ENCODE measurements at regions of chr7 and their contacts with region 1.

Region 1: DNA sequence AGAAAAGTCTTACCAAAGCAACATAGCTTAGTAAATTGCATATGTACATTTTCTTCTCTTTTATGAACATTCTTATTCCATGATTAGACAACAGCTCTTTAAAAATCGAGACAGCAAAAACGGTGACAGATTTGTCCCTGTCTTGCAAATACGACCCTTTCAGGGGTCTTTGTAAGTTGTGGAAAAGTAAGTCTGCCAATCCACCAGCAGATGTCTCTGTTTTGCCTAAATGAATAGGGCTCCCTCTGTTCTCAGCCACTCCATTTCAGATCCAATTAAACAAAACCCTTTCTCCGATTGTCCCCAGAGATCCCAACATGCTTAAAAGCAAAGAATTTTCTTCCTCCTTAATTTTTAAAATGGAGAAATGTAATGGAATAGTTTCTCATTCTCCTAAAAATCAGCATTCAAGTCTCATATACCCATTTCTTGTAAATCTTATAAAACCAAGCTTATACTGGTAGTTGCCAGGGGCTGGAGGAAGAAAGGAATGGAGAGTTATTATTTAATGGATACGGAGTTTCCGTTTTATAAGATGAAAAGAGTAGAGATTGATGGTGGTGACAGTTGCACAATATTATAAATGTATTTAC is 61.0 kb upstream of the NFE2L3 start:
- DNase-seq: peak; percentile 30
- ATAC-seq: peak; percentile 87
- H3K4me3 ChIP-seq: no peak overlapping the region
- H3K27ac ChIP-seq: no peak overlapping the region
- H3K4me1 ChIP-seq: no peaks in the 10 kb centered on the region
- H3K27me3 ChIP-seq: no peaks in the 10 kb centered on the region
- CTCF ChIP-seq: peak; percentile 63 to 73 (median 65)
- EP300 ChIP-seq: no peak
- POLR2A ChIP-seq: no peak
- RAD21 ChIP-seq: peak; percentile 83

Region 2: DNA sequence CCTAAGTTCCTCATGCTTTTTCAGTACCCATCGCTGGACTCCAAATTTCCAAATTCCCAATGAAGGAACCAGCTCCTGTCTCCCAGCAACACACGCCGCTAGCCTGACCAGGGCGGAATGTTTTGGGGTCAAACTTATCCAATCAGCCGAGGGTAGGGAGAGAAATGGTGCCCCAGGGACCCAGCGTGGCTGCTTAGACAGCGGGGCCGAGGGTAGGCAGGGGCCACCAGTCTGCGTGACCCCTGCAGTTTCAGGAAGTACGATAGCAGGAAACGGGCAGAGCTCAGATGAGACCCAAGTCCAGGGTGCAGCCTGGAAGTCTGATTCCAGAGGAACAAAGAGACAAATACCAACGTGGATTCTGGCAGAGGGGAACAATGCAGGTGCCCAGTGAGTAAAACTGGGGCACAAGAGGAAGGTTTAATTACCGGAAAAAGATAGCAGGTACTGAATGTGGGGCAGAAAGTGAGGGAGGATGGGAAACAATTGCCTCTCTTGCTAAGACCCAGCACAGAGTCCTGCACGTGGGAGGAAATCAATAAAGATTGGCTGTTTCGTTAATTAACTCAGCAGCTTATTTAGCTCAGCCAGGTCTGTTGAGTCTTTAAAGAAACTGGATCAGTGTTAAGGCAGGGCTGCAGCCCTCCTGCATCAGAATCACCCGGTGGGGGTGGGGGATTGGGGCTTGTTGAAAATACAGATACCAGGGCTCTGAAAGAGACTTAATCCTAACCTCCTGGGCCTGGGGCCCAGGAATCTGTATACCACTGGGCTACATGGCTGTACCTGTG is 10.5 kb after region 1 on chr7:
- CTCF ChIA-PET with region 1: interaction called, 25 read pairs
- POLR2A ChIA-PET with region 1: interaction called, 4 read pairs
- RAD21 ChIA-PET with region 1: interaction called, 8 read pairs
- SMC1A ChIA-PET with region 1: interaction called, 20 read pairs
- in situ Hi-C with region 1: no loop called
- intact Hi-C with region 1: no loop called
- DNase-seq: no peak
- ATAC-seq: peak; percentile 87
- H3K4me3 ChIP-seq: peak overlapping the region; percentile 58
- H3K27ac ChIP-seq: peak overlapping the region; percentile 63
- H3K4me1 ChIP-seq: peaks cover 15% of the 10 kb centered on the region
- H3K27me3 ChIP-seq: no peaks in the 10 kb centered on the region
- CTCF ChIP-seq: no peak
- EP300 ChIP-seq: no peak
- POLR2A ChIP-seq: peak; percentile 55
- RAD21 ChIP-seq: no peak

Region 3: DNA sequence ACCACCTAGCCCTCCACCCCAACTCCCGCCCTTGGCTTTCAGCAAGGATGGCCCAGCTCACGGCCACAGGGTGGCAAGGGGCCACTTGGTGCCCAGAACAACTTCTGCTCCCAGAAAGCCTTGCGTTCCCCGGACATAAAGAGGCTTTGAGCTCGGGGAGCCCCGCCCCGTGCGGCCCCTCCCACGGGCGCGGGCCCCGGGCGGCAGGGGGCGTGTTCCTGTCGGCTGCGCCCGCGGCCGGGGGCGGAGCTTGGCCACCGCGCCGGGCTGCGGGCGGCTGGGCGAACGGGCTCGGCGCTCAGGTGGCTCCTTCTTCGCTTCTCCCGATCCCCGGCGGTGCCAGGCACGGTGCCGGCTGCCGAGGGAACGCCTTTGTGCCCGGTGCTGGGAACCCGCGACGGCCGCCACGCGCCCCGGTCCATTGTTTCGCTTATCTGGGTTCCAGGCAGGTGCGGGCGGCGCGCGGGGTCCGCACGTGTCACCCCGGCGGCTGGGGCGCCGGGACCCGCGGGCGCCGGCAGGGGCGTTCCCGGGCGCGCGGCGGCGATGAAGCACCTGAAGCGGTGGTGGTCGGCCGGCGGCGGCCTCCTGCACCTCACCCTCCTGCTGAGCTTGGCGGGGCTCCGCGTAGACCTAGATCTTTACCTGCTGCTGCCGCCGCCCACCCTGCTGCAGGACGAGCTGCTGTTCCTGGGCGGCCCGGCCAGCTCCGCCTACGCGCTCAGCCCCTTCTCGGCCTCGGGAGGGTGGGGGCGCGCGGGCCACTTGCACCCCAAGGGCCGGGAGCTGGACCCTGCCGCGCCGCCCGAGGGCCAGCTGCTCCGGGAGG is 61.1 kb after region 1 on chr7 and contains the start of gene NFE2L3:
- CTCF ChIA-PET with region 1: interaction called, 24 read pairs
- POLR2A ChIA-PET with region 1: interaction called, 5 read pairs
- RAD21 ChIA-PET with region 1: interaction called, 21 read pairs
- SMC1A ChIA-PET with region 1: interaction called, 24 read pairs
- in situ Hi-C with region 1: no loop called
- intact Hi-C with region 1: no loop called
- DNase-seq: no peak
- ATAC-seq: peak; percentile 75
- H3K4me3 ChIP-seq: peak within 1 kb of the TSS; percentile 72
- H3K27ac ChIP-seq: peak within 1 kb of the TSS; percentile 88
- H3K4me1 ChIP-seq: peaks cover 23% of the 10 kb centered on the region
- H3K27me3 ChIP-seq: no peaks in the 10 kb centered on the region
- CTCF ChIP-seq: peak; percentile 6 to 17 (median 9); a peak in 1 of 6 replicates
- EP300 ChIP-seq: no peak
- POLR2A ChIP-seq: peak; percentile 82
- RAD21 ChIP-seq: no peak
- polyA plus RNA-seq, gene NFE2L3: 4.9 to 8.9 TPM

Region 4: GRCh38 chr7:26167301-26167934 is 76.4 kb after region 1 on chr7:
- CTCF ChIA-PET with region 1: interaction called, 23 read pairs
- POLR2A ChIA-PET with region 1: interaction called, 3 read pairs
- RAD21 ChIA-PET with region 1: interaction called, 5 read pairs
- SMC1A ChIA-PET with region 1: interaction called, 4 read pairs
- in situ Hi-C with region 1: no loop called
- intact Hi-C with region 1: no loop called
- DNase-seq: no peak
- ATAC-seq: peak; percentile 94
- H3K4me3 ChIP-seq: 0 out of 2 replicates have a peak overlapping the region, but pooled peaks have one; percentile 31
- H3K27ac ChIP-seq: peak overlapping the region; percentile 43
- H3K4me1 ChIP-seq: peaks cover 17% of the 10 kb centered on the region
- H3K27me3 ChIP-seq: no peaks in the 10 kb centered on the region
- CTCF ChIP-seq: no peak
- EP300 ChIP-seq: no peak
- POLR2A ChIP-seq: no peak
- RAD21 ChIP-seq: no peak

Region 5: GRCh38 chr7:26193432-26194207 is 102.6 kb after region 1 on chr7:
- CTCF ChIA-PET with region 1: interaction called, 203 read pairs
- POLR2A ChIA-PET with region 1: interaction called, 7 read pairs
- RAD21 ChIA-PET with region 1: interaction called, 117 read pairs
- SMC1A ChIA-PET with region 1: interaction called, 163 read pairs
- in situ Hi-C with region 1: loop called (anchors 5 kb)
- intact Hi-C with region 1: no loop called
- DNase-seq: no peak
- ATAC-seq: peak; percentile 56
- H3K4me3 ChIP-seq: peak overlapping the region; percentile 49; the same call in 1 of the 2 replicates
- H3K27ac ChIP-seq: no peak overlapping the region
- H3K4me1 ChIP-seq: peaks cover 27% of the 10 kb centered on the region
- H3K27me3 ChIP-seq: no peaks in the 10 kb centered on the region
- CTCF ChIP-seq: no peak
- EP300 ChIP-seq: no peak
- POLR2A ChIP-seq: no peak
- RAD21 ChIP-seq: no peak

Region 6: GRCh38 chr7:26284995-26285632 is 194.1 kb after region 1 on chr7:
- CTCF ChIA-PET with region 1: interaction called, 33 read pairs
- POLR2A ChIA-PET with region 1: no interaction called
- RAD21 ChIA-PET with region 1: interaction called, 21 read pairs
- SMC1A ChIA-PET with region 1: interaction called, 30 read pairs
- in situ Hi-C with region 1: no loop called
- intact Hi-C with region 1: loop called (anchors 2 kb)
- DNase-seq: no peak
- ATAC-seq: peak; percentile 80
- H3K4me3 ChIP-seq: no peak overlapping the region
- H3K27ac ChIP-seq: no peak overlapping the region
- H3K4me1 ChIP-seq: no peaks in the 10 kb centered on the region
- H3K27me3 ChIP-seq: no peaks in the 10 kb centered on the region
- CTCF ChIP-seq: peak in 2 of 3 experiments; percentile 29 to 30; a peak in 2 of 6 replicates
- EP300 ChIP-seq: no peak
- POLR2A ChIP-seq: no peak
- RAD21 ChIP-seq: peak; percentile 38; the same call in 1 of the 2 replicates

Region 7: DNA sequence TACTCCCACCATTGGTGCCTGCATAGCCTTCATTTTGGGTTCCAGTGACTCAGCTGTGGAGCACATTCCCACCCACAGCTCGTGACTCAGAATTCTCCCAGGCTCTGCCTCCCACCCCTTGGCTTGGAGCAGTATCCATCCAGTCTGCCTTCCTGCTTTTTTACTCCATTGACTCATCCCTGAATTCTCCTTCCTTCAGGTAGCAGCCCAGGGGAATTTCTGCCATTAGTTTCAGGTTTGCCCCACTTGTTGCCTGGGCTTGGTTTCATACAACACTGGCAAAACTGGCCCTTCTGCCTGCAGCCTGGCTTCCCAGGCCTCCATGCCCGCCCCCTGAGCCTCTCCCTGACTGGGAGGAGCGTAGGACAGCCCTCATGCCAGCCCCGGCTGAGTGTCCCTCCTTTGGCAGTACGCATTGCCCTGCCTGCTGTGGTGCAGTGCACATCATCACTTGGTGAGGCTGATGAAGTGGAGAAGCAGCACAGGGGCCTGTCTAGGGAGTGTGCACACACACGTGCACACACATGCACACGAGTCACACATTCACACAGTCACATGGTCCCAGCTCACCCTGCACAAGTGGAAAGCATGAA is 255.7 kb after region 1 on chr7:
- CTCF ChIA-PET with region 1: interaction called, 13 read pairs
- POLR2A ChIA-PET with region 1: interaction called, 5 read pairs
- RAD21 ChIA-PET with region 1: interaction called, 5 read pairs
- SMC1A ChIA-PET with region 1: interaction called, 13 read pairs
- in situ Hi-C with region 1: no loop called
- intact Hi-C with region 1: no loop called
- DNase-seq: no peak
- ATAC-seq: peak; percentile 35
- H3K4me3 ChIP-seq: no peak overlapping the region
- H3K27ac ChIP-seq: no peak overlapping the region
- H3K4me1 ChIP-seq: peaks cover 14% of the 10 kb centered on the region
- H3K27me3 ChIP-seq: no peaks in the 10 kb centered on the region
- CTCF ChIP-seq: no peak
- EP300 ChIP-seq: no peak
- POLR2A ChIP-seq: no peak
- RAD21 ChIP-seq: no peak